Uterus (tissue), 4 donors: ENCODE measurements at regions of chr7 and their contacts with region 1.

Region 1: DNA sequence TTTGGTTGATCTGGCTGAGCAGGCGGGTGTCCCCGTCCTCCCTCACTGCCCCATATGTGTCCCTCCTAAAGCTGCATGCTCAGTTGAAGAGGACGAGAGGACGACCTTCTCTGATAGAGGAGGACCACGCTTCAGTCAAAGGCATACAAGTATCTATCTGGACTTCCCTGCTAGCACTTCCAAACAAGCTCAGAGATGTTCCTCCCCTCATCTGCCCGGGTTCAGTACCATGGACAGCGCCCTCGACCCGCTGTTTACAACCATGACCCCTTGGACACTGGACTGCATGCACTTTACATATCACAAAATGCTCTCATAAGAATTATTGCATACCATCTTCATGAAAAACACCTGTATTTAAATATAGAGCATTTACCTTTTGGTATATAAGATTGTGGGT is 26.9 kb upstream of the TRIM56 start:
- DNase-seq: peak; percentile 33 to 39
- H3K4me3 ChIP-seq: no peak overlapping the region
- H3K27ac ChIP-seq: no peak overlapping the region
- H3K4me1 ChIP-seq: no peaks in the 10 kb centered on the region
- H3K27me3 ChIP-seq: peaks cover 0 to 6% of the 10 kb centered on the region in 2 donors
- CTCF ChIP-seq: no peak
- POLR2A ChIP-seq: no peak

Region 2: DNA sequence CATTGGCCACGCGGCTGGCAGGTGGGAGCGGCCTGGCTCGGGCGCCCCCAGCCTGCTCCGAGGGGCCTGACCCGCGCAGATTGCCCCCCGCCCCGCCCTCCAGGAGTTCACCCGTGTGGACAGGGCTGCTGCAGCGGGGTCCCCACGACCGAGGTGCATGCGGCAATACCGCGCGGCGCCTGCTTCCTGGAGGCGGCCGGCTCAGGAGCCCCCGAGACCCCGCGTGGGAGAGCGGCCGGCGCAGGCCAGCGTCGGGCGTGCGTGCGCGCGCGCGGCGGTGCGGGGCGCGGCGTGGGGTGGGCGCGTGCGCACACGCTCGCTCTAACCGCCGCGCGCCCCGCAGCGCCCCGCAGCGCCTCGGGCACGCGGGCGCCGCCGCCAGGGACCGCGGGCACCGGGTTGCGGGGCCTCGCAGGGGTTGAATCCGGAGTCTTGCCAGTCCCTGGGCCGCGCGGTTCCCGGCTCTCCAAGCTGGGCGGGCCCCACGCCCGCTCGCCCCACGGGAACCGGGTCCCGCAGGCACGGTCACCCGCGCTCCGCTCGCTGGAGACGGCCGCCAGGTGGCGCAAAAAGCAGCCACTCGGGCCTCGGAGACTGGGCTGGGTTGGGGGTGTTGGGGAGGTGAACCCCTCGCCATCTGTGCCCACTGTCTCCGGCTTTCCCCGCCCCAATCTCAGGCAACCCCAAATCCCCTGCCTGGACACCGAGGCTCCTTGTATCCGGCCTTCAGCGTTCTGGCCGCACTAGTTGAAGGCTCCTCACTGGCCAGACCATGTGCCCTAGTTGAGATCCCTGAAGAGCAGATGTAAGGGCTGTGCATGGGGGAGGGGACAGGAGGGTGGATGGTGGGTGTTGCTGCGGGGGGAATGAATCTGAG is 161.4 kb before region 1 on chr7:
- intact Hi-C with region 1: loop called (anchors 2 kb)
- DNase-seq: peak in 1 of 2 donors; percentile 73
- H3K4me3 ChIP-seq: peak overlapping the region in 1 of 2 donors; percentile 29
- H3K27ac ChIP-seq: no peak overlapping the region
- H3K4me1 ChIP-seq: peaks cover 0 to 19% of the 10 kb centered on the region in 2 donors
- H3K27me3 ChIP-seq: peaks cover 0 to 8% of the 10 kb centered on the region in 2 donors
- CTCF ChIP-seq: peak; percentile 46 to 78 (median 72)
- POLR2A ChIP-seq: no peak

Region 3: GRCh38 chr7:100914879-100915447 is 143.4 kb before region 1 on chr7:
- intact Hi-C with region 1: no loop called
- DNase-seq: no peak
- H3K4me3 ChIP-seq: no peak overlapping the region
- H3K27ac ChIP-seq: no peak overlapping the region
- H3K4me1 ChIP-seq: no peaks in the 10 kb centered on the region
- H3K27me3 ChIP-seq: no peaks in the 10 kb centered on the region
- CTCF ChIP-seq: no peak
- POLR2A ChIP-seq: no peak